SK-N-SH (cell line): ENCODE measurements at regions of chr13 and their contacts with region 1.

Region 1: GRCh38 chr13:91946498-91947070 is 548.2 kb downstream of the GPC5 start:
- DNase-seq: peak; percentile 63
- H3K4me3 ChIP-seq: no peak overlapping the region; a peak in 1 of 4 replicates
- H3K27ac ChIP-seq: no peak overlapping the region
- H3K4me1 ChIP-seq: no peaks in the 10 kb centered on the region
- H3K27me3 ChIP-seq: no peaks in the 10 kb centered on the region
- CTCF ChIP-seq: peak; percentile 60
- EP300 ChIP-seq: no peak
- RAD21 ChIP-seq: peak; percentile 81

Region 2: GRCh38 chr13:91934354-91934753 is 12.2 kb before region 1 on chr13:
- CTCF ChIA-PET with region 1: interaction called, 17 read pairs
- POLR2A ChIA-PET with region 1: no interaction called
- DNase-seq: no peak
- H3K4me3 ChIP-seq: no peak overlapping the region
- H3K27ac ChIP-seq: no peak overlapping the region
- H3K4me1 ChIP-seq: no peaks in the 10 kb centered on the region
- H3K27me3 ChIP-seq: no peaks in the 10 kb centered on the region
- CTCF ChIP-seq: no peak
- EP300 ChIP-seq: no peak
- RAD21 ChIP-seq: no peak

Region 3: GRCh38 chr13:92074658-92075057 is 128.1 kb after region 1 on chr13:
- CTCF ChIA-PET with region 1: interaction called, 18 read pairs
- POLR2A ChIA-PET with region 1: no interaction called
- DNase-seq: peak; percentile 14
- H3K4me3 ChIP-seq: no peak overlapping the region; a peak in 1 of 4 replicates
- H3K27ac ChIP-seq: no peak overlapping the region
- H3K4me1 ChIP-seq: no peaks in the 10 kb centered on the region
- H3K27me3 ChIP-seq: no peaks in the 10 kb centered on the region
- CTCF ChIP-seq: peak; percentile 44
- EP300 ChIP-seq: no peak
- RAD21 ChIP-seq: peak; percentile 63

Region 4: GRCh38 chr13:92260363-92260762 is 313.8 kb after region 1 on chr13:
- CTCF ChIA-PET with region 1: no interaction called
- POLR2A ChIA-PET with region 1: no interaction called
- DNase-seq: no peak
- H3K4me3 ChIP-seq: no peak overlapping the region
- H3K27ac ChIP-seq: no peak overlapping the region
- H3K4me1 ChIP-seq: no peaks in the 10 kb centered on the region
- H3K27me3 ChIP-seq: no peaks in the 10 kb centered on the region
- CTCF ChIP-seq: no peak
- EP300 ChIP-seq: no peak
- RAD21 ChIP-seq: no peak

Region 5: DNA sequence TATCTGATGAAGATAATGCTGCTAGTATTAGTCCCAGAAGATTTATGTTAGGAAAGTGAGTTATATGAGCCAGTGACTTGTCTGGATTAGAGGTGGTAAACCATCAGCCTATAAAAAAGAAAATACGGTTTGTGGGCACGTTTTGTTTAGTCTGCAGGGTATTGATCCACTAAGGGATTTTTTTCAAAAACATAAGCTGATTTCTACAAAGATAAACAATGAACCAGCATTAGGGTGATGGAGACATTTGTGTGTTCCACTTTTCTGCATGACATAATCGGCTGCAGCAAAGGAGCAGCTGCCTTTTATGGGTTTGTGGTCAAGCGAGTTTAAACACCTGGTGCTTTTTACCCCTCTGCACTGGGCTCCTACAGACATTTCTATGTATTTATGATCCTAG is 443.6 kb after region 1 on chr13:
- CTCF ChIA-PET with region 1: no interaction called
- POLR2A ChIA-PET with region 1: no interaction called
- DNase-seq: no peak
- H3K4me3 ChIP-seq: no peak overlapping the region
- H3K27ac ChIP-seq: no peak overlapping the region
- H3K4me1 ChIP-seq: no peaks in the 10 kb centered on the region
- H3K27me3 ChIP-seq: no peaks in the 10 kb centered on the region
- CTCF ChIP-seq: no peak
- EP300 ChIP-seq: no peak
- RAD21 ChIP-seq: no peak